HepG2 (cell line): ENCODE measurements at regions of chr4 and their contacts with region 1.

Region 1: DNA sequence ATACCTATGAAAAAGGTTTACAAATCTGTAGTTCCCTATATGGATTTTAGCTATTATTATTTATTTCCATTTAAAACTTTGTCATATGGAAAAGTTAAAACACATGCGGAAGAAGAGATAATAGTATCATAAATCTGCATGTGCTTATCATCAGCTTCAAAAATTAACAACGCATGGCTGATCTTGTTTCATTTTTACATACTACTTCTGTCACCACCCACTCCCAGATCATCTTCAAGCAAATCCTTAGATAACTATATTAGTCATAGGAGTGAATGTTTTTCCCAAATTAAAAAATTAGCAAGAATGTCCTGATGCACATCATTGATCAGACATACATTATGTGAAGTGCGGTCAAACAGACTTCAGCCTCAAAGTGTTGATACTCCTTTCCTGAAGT is 24.6 kb upstream of the MOB1B start:
- DNase-seq: no peak
- ATAC-seq: no peak
- H3K4me3 ChIP-seq: no peak overlapping the region
- H3K27ac ChIP-seq: no peak overlapping the region
- H3K4me1 ChIP-seq: no peaks in the 10 kb centered on the region
- H3K27me3 ChIP-seq: no peaks in the 10 kb centered on the region
- CTCF ChIP-seq: no peak
- EP300 ChIP-seq: no peak
- POLR2A ChIP-seq: no peak
- RAD21 ChIP-seq: no peak

Region 2: GRCh38 chr4:70945452-70946055 is 68.0 kb after region 1 on chr4:
- CTCF ChIA-PET with region 1: no interaction called
- POLR2A ChIA-PET with region 1: no interaction called
- in situ Hi-C with region 1: no loop called
- intact Hi-C with region 1: loop called (anchors 2 kb)
- DNase-seq: no peak
- ATAC-seq: no peak
- H3K4me3 ChIP-seq: no peak overlapping the region
- H3K27ac ChIP-seq: no peak overlapping the region
- H3K4me1 ChIP-seq: peaks cover 10% of the 10 kb centered on the region
- H3K27me3 ChIP-seq: no peaks in the 10 kb centered on the region
- CTCF ChIP-seq: no peak
- EP300 ChIP-seq: no peak
- POLR2A ChIP-seq: no peak
- RAD21 ChIP-seq: no peak

Region 3: DNA sequence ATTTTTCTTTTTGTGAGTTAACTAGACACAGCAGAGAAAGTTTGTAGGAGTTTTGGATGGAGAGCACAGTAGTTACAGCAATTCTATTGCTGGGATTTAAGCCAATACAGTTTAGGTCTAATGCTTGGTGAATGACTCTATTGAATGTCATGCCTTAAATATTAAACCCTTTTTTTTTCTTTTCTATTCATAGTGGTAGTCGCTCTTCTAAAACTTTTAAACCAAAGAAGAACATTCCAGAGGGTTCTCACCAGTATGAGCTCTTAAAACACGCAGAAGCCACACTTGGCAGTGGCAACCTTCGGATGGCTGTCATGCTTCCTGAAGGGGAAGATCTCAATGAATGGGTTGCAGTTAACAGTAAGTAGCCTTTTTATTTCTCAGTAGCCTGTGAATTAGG is 81.1 kb after region 1 on chr4:
- CTCF ChIA-PET with region 1: no interaction called
- POLR2A ChIA-PET with region 1: no interaction called
- in situ Hi-C with region 1: no loop called
- intact Hi-C with region 1: no loop called
- DNase-seq: no peak
- ATAC-seq: no peak
- H3K4me3 ChIP-seq: no peak overlapping the region
- H3K27ac ChIP-seq: no peak overlapping the region
- H3K4me1 ChIP-seq: no peaks in the 10 kb centered on the region
- H3K27me3 ChIP-seq: no peaks in the 10 kb centered on the region
- CTCF ChIP-seq: no peak
- EP300 ChIP-seq: no peak
- POLR2A ChIP-seq: no peak
- RAD21 ChIP-seq: no peak

Region 4: DNA sequence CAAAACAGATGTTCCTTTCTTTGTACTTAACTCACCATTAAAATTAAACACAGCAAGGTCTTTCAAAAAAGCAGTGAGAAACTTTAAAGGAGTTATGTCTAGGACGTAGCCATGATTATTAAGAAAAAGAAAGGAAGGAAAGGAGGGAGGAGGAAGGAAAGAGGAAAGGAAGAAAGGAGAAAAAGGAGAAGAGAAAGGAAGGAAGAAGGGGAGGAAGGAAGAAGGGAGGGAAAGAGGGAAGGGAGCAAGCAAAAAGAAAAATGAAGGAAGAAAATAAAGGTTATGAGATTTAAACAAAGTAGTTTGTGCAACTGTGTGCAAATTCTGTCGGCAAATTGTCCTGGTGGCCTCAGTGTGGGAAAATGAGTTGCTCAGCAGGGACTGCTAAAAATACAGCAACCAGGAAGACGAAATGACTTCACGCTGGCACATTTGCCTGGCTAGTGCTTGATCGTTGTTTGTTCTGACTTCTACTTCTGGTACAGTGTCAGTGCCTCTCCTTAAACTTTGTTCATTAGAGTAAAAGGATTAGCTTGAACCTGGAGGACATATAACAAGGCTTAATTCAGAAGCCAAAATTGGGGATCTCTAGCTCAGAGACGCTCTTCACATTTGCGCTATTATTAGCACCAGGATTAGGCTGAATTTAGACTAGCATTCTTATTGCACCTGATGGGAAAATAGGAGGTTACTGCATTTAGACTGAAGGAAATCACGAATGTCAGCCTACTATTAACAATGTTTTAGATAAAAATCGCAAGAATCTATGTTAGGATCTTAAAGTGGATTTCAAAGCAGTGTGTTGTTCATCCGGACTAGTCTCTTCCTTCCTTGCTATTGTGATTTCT is 197.1 kb after region 1 on chr4:
- CTCF ChIA-PET with region 1: no interaction called
- POLR2A ChIA-PET with region 1: no interaction called
- in situ Hi-C with region 1: no loop called
- intact Hi-C with region 1: no loop called
- DNase-seq: no peak
- ATAC-seq: no peak
- H3K4me3 ChIP-seq: no peak overlapping the region
- H3K27ac ChIP-seq: no peak overlapping the region
- H3K4me1 ChIP-seq: no peaks in the 10 kb centered on the region
- H3K27me3 ChIP-seq: peaks cover 1 to 10% of the 10 kb centered on the region in 2 experiments; a peak in 2 of 5 replicates
- CTCF ChIP-seq: no peak
- EP300 ChIP-seq: no peak
- POLR2A ChIP-seq: no peak
- RAD21 ChIP-seq: no peak